ENCODE measurements at regions of chr14 and their contacts with region 1.

Region 1: DNA sequence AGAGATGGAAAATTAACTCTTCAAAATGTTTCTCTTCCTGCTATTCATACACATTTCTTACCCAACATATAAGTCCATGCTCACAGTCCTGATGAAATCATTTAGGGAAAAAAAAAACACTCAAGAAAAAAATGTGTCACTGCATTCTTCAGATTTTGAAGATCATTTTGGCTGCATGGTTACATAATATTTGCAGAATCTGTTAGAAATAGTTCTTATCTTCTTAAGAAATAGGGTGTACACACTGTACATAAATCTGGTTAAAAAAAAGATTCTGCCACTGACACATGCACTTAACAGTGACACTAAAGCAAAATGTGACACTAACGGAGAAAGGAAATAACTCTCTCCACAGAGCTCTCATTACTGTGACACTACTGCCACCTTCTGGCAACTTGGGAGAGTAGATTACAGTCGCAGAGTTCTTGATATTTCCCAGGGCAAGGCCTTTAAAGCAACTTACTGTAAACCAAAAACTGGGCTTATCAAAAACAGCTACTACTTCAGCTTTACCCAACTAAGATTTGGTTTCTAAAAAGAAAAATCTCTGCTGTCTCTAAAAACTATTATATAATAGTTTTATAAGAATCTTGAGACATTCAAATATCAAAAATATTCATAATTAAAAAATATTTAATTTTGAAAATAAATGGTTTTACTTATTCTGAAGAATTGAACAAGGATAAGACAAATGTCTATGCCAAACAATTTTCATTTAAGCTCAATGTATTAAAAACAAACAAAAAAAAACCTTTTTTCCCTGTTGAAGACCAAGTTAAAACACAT is 65.0 kb downstream of the SETD3 start:
- DNase-seq: peak; percentile 79
- ATAC-seq: peak; percentile 98
- H3K4me3 Mint-ChIP-seq: no peak overlapping the region
- H3K27ac Mint-ChIP-seq: no peak overlapping the region
- H3K4me1 Mint-ChIP-seq: peaks cover 30% of the 10 kb centered on the region
- H3K27me3 Mint-ChIP-seq: no peaks in the 10 kb centered on the region

Region 2: DNA sequence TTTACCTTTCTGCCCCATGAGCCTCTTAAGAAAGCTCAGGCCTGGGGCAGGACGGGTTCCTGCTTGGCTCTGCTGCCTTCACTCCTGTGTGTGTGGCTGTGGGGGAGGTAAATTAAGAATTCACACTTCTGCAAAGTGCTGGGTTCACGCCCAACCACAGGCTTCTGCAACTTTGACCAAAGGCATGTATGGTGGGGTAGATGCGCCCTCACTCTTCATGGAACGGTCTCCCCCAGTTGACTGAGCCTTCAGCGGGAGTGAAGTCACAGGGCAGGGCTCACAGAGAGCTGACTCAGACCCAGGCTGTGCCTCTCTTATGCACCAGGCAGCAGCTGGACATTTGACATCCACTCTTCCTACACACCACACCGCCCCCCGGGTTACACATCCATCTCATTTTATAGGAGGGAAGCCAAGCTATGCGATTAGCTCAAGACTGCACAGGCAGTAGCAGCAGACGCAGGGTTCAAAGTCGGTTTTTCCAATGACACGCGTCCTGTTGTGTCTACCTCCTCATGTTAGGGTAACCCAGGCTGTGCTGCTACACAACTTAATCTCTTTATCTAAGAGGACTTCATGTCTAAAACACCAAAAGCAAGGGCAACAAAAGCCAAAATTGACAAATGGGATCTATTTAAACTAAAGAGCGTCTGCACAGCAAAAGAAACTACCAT is 128.3 kb before region 1 on chr14:
- CTCF ChIA-PET with region 1: interaction called, 13 read pairs
- DNase-seq: peak; percentile 84
- ATAC-seq: peak; percentile 92
- H3K4me3 Mint-ChIP-seq: peak overlapping the region; percentile 80
- H3K27ac Mint-ChIP-seq: peak overlapping the region; percentile 92
- H3K4me1 Mint-ChIP-seq: peaks cover 26% of the 10 kb centered on the region
- H3K27me3 Mint-ChIP-seq: no peaks in the 10 kb centered on the region

Region 3: DNA sequence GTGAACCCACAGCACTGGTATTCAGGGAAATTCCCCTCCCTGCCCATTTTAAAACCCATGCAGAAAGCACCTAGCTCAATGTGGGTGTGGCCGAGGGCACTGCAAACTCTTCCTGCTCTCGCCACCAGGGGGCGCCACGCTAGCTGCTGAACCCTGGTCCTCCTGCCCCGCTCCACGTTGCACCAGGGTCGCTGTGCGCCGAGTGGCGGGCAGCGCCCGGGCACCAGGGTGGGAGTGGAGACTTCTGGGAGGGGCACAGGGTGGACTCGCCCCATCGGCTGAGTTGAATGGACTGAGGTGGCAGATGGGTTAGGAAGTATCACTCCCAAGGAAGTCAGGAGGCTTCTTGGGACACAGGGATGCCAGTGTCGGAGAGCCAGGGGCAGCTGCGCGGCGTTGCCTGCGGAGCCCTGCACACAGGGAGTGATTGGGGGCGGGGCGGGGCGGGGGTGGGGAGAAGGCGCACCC is 95.5 kb before region 1 on chr14:
- CTCF ChIA-PET with region 1: interaction called, 56 read pairs
- DNase-seq: peak; percentile 85
- ATAC-seq: peak; percentile 86
- H3K4me3 Mint-ChIP-seq: no peak overlapping the region
- H3K27ac Mint-ChIP-seq: no peak overlapping the region
- H3K4me1 Mint-ChIP-seq: peaks cover 20% of the 10 kb centered on the region
- H3K27me3 Mint-ChIP-seq: peaks cover 3% of the 10 kb centered on the region

Region 4: GRCh38 chr14:99348816-99349614 is 66.7 kb before region 1 on chr14:
- CTCF ChIA-PET with region 1: no interaction called
- DNase-seq: no peak
- ATAC-seq: no peak
- H3K4me3 Mint-ChIP-seq: no peak overlapping the region
- H3K27ac Mint-ChIP-seq: no peak overlapping the region
- H3K4me1 Mint-ChIP-seq: no peaks in the 10 kb centered on the region
- H3K27me3 Mint-ChIP-seq: peaks cover 7% of the 10 kb centered on the region

Region 5: DNA sequence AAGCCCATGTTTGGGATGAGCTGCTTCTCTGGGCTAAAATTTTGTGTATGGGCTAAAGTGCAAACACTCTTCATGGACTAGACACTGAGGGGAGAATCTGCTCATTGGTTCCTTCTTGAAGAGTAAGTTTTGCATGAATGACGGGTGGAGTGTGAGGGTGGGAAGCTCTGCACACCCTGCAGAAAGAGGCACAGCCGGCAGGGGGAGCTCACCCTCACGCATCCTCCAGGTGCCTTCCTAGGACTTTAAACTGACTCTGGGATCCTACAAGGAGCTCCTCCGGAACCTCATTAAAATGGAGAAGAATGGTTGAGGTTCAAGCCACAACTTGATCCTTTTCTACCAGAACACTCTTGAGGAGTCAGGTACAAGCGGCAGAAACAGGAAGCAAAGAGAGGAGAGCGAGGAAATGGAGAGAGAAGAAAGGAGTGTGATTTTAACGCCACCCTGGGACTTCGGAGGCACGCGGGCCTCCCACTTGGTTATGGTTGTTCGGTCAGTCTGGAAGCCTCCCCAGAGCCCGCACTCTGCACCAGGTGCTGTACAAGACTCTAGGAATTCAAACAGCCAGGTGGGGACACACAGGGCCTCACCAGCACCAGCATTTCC is 22.5 kb before region 1 on chr14:
- CTCF ChIA-PET with region 1: interaction called, 158 read pairs
- DNase-seq: peak; percentile 51
- ATAC-seq: peak; percentile 30
- H3K4me3 Mint-ChIP-seq: no peak overlapping the region
- H3K27ac Mint-ChIP-seq: no peak overlapping the region
- H3K4me1 Mint-ChIP-seq: peaks cover 20% of the 10 kb centered on the region
- H3K27me3 Mint-ChIP-seq: no peaks in the 10 kb centered on the region

Region 6: DNA sequence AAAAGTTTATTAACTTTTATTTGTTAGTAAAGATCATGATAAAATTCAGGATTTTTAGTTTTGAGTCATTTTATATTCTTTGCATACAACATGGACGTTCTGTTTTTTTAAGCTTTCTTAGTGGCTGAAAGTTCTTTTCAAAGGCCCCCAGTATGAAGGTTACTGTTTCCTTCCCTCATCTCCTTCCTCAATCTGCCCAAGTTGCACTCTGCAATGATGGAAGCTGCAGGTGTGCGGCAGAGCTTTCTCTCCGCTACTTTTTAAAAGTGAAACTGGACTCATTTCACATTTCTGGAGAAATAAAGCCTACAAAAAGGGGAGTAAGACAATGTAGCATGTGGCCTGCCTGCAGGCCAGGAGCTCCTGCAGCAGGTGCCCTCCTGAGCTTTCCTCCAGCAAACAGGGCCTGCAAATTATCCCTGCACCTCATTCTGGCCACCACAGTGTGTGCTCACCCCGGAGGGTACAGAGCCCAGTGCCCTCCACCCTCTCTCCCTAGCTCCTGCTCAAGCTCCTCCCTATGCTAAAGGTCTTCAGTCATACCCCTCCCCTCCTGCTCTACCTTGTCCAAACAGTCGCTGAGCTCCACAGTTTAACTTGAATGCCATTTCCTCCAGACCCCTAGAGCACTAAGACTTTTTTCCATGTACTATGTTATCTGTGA is 13.9 kb before region 1 on chr14:
- CTCF ChIA-PET with region 1: interaction called, 158 read pairs
- DNase-seq: no peak
- ATAC-seq: no peak
- H3K4me3 Mint-ChIP-seq: no peak overlapping the region
- H3K27ac Mint-ChIP-seq: peak overlapping the region; percentile 34
- H3K4me1 Mint-ChIP-seq: peaks cover 27% of the 10 kb centered on the region
- H3K27me3 Mint-ChIP-seq: no peaks in the 10 kb centered on the region

Region 7: DNA sequence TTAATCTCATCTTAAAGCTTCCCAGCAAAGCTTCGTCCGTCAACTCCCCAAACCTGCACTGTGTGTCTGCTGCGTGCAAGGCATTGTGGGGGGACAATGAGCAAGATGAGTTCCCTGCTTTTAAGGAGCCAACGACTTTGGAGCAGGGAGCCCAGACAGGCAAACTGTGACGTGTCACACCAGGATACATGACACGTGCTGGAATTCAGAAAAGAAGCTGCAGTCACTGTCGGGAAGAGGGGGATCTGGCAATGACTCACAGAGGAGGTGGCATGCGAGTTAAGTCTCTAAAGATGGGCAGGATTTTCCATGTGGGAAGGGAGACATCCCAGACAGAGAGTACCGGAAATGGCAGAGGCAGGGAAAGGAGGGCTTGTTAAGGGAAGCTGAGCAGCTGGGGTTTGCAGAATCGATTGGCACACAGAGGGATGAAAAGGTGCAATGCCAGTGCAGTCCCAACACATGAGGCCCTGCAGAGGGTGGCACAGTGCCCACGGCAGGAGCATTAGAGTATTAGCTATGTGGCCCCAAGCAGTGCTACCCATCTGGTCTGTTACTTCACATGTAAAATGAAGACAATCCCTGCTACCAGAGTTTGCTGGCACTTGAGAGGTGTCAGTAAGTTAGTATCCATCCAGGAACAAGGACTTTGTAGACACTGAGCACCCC is 12.1 kb after region 1 on chr14:
- CTCF ChIA-PET with region 1: interaction called, 15 read pairs
- DNase-seq: no peak
- ATAC-seq: no peak
- H3K4me3 Mint-ChIP-seq: no peak overlapping the region
- H3K27ac Mint-ChIP-seq: no peak overlapping the region
- H3K4me1 Mint-ChIP-seq: peaks cover 2% of the 10 kb centered on the region
- H3K27me3 Mint-ChIP-seq: no peaks in the 10 kb centered on the region

Region 8: GRCh38 chr14:99436247-99437180 is 20.8 kb after region 1 on chr14:
- CTCF ChIA-PET with region 1: interaction called, 18 read pairs
- DNase-seq: no peak
- ATAC-seq: peak; percentile 82
- H3K4me3 Mint-ChIP-seq: no peak overlapping the region
- H3K27ac Mint-ChIP-seq: peak overlapping the region; percentile 74
- H3K4me1 Mint-ChIP-seq: peaks cover 31% of the 10 kb centered on the region
- H3K27me3 Mint-ChIP-seq: no peaks in the 10 kb centered on the region

Region 9: GRCh38 chr14:99821519-99822508 is 406.1 kb after region 1 on chr14:
- CTCF ChIA-PET with region 1: no interaction called
- DNase-seq: no peak
- ATAC-seq: no peak
- H3K4me3 Mint-ChIP-seq: no peak overlapping the region
- H3K27ac Mint-ChIP-seq: no peak overlapping the region
- H3K4me1 Mint-ChIP-seq: peaks cover 17% of the 10 kb centered on the region
- H3K27me3 Mint-ChIP-seq: peaks cover 48% of the 10 kb centered on the region

Measured in activated CD8-positive, alpha-beta memory T cell treated with anti-CD3 and anti-CD28 coated beads, Interleukin-2, amount 10 ng/mL, durations not matched to agents 7 days and 5 days (primary cell).